Activated T-helper 1 cell treated with anti-CD3 and anti-CD28 coated beads, Interleukin-12 subunit alpha, Interleukin-12 subunit beta, Interleukin-2, Interleukin-4 antibody, amounts not matched to agents 30 ng/mL and 10 ng/mL and 1 ng/mL, durations not matched to agents 14 hours and 24 hours and 36 hours (primary cell): ENCODE measurements at regions of chr6 and their contacts with region 1.

Region 1: DNA sequence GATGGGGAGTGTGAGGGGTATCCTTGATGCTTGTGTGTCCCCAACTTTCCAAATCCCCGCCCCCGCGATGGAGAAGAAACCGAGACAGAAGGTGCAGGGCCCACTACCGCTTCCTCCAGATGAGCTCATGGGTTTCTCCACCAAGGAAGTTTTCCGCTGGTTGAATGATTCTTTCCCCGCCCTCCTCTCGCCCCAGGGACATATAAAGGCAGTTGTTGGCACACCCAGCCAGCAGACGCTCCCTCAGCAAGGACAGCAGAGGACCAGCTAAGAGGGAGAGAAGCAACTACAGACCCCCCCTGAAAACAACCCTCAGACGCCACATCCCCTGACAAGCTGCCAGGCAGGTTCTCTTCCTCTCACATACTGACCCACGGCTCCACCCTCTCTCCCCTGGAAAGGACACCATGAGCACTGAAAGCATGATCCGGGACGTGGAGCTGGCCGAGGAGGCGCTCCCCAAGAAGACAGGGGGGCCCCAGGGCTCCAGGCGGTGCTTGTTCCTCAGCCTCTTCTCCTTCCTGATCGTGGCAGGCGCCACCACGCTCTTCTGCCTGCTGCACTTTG is at the start of gene TNF:
- DNase-seq: peak; percentile 85
- H3K4me3 Mint-ChIP-seq: peak within 1 kb of the TSS; percentile 92
- H3K27ac Mint-ChIP-seq: peak within 1 kb of the TSS; percentile 81
- H3K4me1 Mint-ChIP-seq: peaks cover 81% of the 10 kb centered on the region
- H3K27me3 Mint-ChIP-seq: peaks cover 2% of the 10 kb centered on the region
- total RNA-seq, gene TNF: 427 and 430 TPM in 2 replicates

Region 2: DNA sequence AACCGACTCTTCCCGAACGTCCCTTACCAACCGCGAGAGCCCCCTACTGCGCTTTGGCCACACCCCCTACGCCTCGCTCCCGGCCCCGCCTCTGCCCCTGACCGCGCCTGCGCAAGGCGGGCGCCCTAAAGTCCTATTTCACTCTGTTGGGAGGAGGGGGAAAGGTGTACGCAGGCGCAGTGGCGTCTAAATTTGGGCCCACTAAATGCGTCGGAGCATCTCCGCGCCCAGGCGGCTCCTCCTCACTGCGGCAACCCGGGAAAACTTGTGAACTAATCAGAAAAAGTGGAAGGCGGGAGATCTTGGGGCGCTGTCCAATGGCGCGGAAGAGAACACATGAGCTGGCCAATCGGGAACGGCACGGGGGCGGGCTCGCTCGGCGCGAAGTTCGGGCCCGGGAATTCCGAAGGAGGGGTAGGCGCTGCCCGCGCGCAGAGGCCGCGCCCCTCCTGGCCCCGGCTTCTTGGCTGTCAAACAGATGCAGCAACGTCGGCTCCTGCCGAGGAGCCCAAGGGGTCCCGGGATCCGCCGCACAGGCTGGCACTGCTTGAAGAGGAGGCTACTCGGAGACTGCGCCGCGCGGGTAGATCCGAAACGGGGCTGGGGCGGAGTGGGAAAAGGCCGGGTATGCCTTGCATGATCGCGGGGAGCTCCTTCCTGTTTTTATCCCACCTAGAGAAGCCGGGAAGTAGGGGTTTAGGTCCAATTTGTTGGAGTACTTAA is 417.1 kb before region 1 on chr6 and contains the start of gene TCF19:
- intact Hi-C with region 1: no loop called
- DNase-seq: peak; percentile 99
- H3K4me3 Mint-ChIP-seq: peak within 1 kb of the TSS; percentile 82
- H3K27ac Mint-ChIP-seq: peak within 1 kb of the TSS; percentile 75
- H3K4me1 Mint-ChIP-seq: peaks cover 29% of the 10 kb centered on the region
- H3K27me3 Mint-ChIP-seq: no peaks in the 10 kb centered on the region
- total RNA-seq, gene TCF19: 75.9 and 78.4 TPM in 2 replicates

Region 3: DNA sequence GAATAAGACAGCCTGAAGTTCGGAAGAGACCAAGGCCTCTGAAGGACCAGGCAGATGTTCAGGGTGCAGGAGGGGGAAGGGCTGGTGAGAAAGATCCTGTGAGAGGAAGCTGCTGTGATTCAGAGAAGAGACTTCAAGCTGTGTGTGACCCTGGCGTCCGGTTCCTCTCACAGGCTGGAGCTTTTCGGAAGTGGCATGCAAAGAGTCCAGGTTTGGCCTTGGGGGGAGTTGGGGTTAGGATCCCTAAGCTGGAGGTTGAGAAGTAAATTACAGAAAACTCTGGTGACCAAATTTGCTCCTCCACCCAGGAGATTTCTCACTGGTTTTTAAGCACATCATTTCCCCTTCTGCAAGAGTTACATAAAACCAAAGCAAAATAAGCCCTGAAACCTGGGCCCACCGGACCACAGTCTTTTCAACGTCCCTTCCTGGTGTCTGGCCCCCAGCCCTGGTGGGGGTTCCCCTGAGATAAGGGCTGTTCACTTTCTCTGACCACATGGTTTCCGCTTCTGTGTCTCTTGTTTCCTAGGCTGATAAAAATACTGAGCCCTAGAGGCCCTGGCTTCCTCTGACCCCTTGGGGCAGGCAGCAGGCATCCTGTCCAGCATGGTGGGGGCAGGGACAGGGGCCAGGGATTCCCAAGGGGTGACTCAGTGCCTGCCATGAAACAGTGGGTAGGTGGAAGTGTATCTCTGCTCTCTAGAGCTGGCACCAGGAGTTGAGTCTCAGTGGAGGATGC is 15.3 kb before region 1 on chr6:
- intact Hi-C with region 1: loop called (anchors 1 kb)
- DNase-seq: peak; percentile 41
- H3K4me3 Mint-ChIP-seq: peak overlapping the region; percentile 69
- H3K27ac Mint-ChIP-seq: peak overlapping the region; percentile 95
- H3K4me1 Mint-ChIP-seq: peaks cover 72% of the 10 kb centered on the region
- H3K27me3 Mint-ChIP-seq: peaks cover 5% of the 10 kb centered on the region

Region 4: DNA sequence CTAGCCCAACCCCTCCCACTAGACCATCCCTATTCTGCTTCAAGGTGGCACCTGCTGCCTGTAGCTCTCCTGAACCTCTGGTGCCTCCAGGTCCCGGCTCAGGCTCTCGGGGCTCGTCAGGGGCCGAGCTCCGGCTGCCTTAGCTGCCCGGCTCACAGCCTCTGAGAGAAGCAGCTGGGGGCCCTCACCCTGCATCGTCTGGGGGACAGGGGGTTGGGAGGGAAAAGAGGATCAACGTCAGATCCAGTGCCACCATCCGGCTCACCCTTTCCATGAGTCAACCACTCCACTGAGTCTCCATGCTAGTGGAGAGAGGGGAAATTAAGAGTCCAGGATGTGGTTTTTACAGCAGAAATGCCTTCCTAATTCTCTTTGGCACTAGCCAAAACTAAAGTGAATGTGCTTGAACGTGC is 64.0 kb after region 1 on chr6:
- intact Hi-C with region 1: no loop called
- DNase-seq: no peak
- H3K4me3 Mint-ChIP-seq: no peak overlapping the region
- H3K27ac Mint-ChIP-seq: peak overlapping the region; percentile 43
- H3K4me1 Mint-ChIP-seq: peaks cover 5% of the 10 kb centered on the region
- H3K27me3 Mint-ChIP-seq: no peaks in the 10 kb centered on the region

Region 5: DNA sequence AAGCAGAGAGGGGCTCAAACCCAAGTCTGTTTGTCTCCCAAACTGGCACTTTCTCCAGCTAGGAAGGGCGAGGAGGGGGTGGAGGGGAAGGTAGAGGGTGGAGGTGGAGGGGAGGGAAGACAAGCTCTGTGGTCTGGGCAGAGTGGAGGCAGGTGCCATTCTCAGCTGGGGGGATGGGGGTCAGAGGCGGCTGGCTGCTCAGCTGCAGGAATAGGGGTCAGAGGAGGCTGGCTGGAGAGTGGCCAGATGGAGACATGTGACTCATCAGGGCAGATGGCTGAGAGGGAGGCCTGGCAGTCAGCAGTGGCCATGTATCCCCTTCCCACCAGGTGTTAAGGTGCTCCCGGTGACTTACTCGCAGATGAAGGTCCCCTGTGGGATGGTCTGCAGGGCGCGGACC is 306.9 kb after region 1 on chr6:
- intact Hi-C with region 1: no loop called
- DNase-seq: no peak
- H3K4me3 Mint-ChIP-seq: no peak overlapping the region
- H3K27ac Mint-ChIP-seq: no peak overlapping the region
- H3K4me1 Mint-ChIP-seq: no peaks in the 10 kb centered on the region
- H3K27me3 Mint-ChIP-seq: no peaks in the 10 kb centered on the region

Region 6: GRCh38 chr6:32785781-32786533 is 1210.5 kb after region 1 on chr6:
- intact Hi-C with region 1: no loop called
- DNase-seq: peak; percentile 25
- H3K4me3 Mint-ChIP-seq: no peak overlapping the region
- H3K27ac Mint-ChIP-seq: no peak overlapping the region
- H3K4me1 Mint-ChIP-seq: no peaks in the 10 kb centered on the region
- H3K27me3 Mint-ChIP-seq: peaks cover 56% of the 10 kb centered on the region